PC-3 (cell line): ENCODE measurements at regions of chr4 and their contacts with region 1.

Region 1: DNA sequence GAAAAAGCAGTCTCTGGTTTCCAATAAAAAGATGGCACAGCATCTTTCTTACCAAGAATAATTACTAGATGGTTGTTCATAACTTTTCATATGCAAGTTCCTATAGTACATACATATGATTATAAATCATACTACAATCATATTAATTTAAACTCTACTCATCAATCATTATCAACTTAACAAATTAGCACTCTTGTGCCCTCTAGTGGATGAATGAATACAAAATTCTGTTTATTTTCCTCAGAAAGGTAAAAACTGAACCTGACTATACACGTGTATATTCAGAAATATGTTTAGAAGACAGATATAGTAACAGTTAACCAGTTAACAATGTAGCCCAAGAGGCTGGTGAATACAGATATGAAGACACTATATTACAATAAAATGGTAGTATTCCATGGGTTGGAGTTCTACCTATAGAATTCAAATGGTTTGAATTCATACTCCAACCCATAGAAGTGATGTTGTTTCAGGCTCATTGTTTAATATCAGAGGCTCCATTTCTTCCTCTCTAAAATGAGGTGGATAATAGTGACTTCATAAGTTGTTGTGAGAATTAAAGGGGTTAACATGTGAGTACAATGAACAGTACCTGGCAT is 100.0 kb downstream of the ADAMTS3 start:
- DNase-seq: peak; percentile 83
- ATAC-seq: peak; percentile 29; the same call in 1 of the 2 replicates
- H3K4me3 ChIP-seq: no peak overlapping the region
- H3K27ac ChIP-seq: no peak overlapping the region
- H3K4me1 ChIP-seq: no peaks in the 10 kb centered on the region
- H3K27me3 ChIP-seq: no peaks in the 10 kb centered on the region
- CTCF ChIP-seq: peak; percentile 92

Region 2: DNA sequence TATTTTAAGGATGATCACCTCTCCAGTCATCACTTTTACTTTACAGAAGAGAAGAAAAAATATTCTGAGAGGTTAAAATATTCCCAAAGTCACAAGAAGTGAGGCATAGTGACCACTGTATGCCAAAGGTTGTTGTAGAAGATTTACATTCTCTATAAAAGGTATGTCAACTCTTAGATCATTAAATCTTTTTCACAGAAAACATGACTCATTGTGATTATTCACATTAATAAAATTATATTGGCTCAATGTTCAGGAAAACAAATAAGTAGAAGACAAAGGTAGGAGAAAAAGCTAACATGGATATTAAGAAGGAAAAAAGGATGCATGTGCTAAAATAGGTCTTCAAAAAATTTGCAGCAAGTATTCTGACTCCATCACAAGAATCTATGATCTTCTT is 18.0 kb after region 1 on chr4:
- CTCF ChIA-PET with region 1: no interaction called
- POLR2A ChIA-PET with region 1: interaction called, 5 read pairs
- intact Hi-C with region 1: loop called (anchors 2 kb)
- DNase-seq: peak; percentile 90
- ATAC-seq: peak; percentile 78
- H3K4me3 ChIP-seq: no peak overlapping the region
- H3K27ac ChIP-seq: peak overlapping the region; percentile 62
- H3K4me1 ChIP-seq: peaks cover 44% of the 10 kb centered on the region
- H3K27me3 ChIP-seq: no peaks in the 10 kb centered on the region
- CTCF ChIP-seq: no peak

Region 3: GRCh38 chr4:72496112-72496511 is 27.1 kb after region 1 on chr4:
- CTCF ChIA-PET with region 1: no interaction called
- POLR2A ChIA-PET with region 1: no interaction called
- intact Hi-C with region 1: loop called (anchors 1 kb)
- DNase-seq: peak; percentile 71
- ATAC-seq: peak; percentile 87
- H3K4me3 ChIP-seq: no peak overlapping the region
- H3K27ac ChIP-seq: no peak overlapping the region
- H3K4me1 ChIP-seq: no peaks in the 10 kb centered on the region
- H3K27me3 ChIP-seq: no peaks in the 10 kb centered on the region
- CTCF ChIP-seq: peak; percentile 79

Region 4: GRCh38 chr4:72604324-72604723 is 135.3 kb after region 1 on chr4:
- CTCF ChIA-PET with region 1: no interaction called
- POLR2A ChIA-PET with region 1: no interaction called
- intact Hi-C with region 1: no loop called
- DNase-seq: peak; percentile 83
- ATAC-seq: no peak
- H3K4me3 ChIP-seq: no peak overlapping the region
- H3K27ac ChIP-seq: no peak overlapping the region
- H3K4me1 ChIP-seq: peaks cover 7% of the 10 kb centered on the region; the same call in 1 of the 2 replicates
- H3K27me3 ChIP-seq: no peaks in the 10 kb centered on the region
- CTCF ChIP-seq: no peak

Region 5: GRCh38 chr4:72631296-72631695 is 162.3 kb after region 1 on chr4:
- CTCF ChIA-PET with region 1: no interaction called
- POLR2A ChIA-PET with region 1: no interaction called
- intact Hi-C with region 1: no loop called
- DNase-seq: peak; percentile 95
- ATAC-seq: peak; percentile 90
- H3K4me3 ChIP-seq: no peak overlapping the region
- H3K27ac ChIP-seq: no peak overlapping the region
- H3K4me1 ChIP-seq: peaks cover 16% of the 10 kb centered on the region
- H3K27me3 ChIP-seq: no peaks in the 10 kb centered on the region
- CTCF ChIP-seq: no peak